GM12878 (cell line): ENCODE measurements at regions of chr6 and their contacts with region 1.

Region 1: GRCh38 chr6:158686791-158687381 is 37.0 kb downstream of the SYTL3 start:
- DNase-seq: no peak
- ATAC-seq: peak; percentile 71
- H3K4me3 ChIP-seq: no peak overlapping the region
- H3K27ac ChIP-seq: no peak overlapping the region
- H3K4me1 ChIP-seq: peaks cover 13% of the 10 kb centered on the region
- H3K27me3 ChIP-seq: no peaks in the 10 kb centered on the region
- CTCF ChIP-seq: no peak
- EP300 ChIP-seq: no peak
- POLR2A ChIP-seq: no peak
- RAD21 ChIP-seq: no peak

Region 2: DNA sequence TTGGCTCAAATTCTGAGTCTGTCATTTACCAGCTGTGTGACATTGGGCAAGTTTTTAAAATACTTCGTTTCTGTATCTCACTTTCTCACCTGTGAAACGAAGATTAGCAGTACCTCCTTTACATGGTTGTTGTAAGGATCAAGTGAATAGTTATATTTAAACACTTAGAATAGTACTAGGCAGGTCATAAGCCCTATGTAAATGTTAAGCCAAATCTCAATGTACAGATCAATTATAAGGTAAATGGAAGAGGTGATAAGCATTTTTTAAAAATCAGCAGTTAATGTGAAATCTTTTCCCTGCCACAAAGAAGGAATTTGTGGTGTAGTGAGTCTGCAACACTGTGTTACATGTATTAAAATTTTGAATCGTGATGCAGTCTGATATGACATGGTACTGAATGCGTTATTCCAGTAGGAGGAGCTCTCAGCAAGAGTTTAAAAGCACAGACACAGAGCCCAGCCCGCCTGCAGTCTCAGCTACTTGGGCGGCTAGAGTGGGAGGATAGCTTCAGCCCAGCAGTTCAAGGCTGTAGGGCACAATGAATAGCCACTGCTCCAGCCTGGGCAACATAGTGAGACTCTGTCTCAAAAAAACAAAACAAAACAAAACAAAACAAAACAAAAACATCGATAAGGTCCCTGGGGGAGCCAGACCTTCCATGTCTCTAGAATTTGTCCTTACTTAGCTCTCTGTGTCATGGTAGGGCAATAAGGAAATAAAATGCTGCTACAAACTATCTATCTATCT is 472.8 kb before region 1 on chr6:
- CTCF ChIA-PET with region 1: interaction called, 96 read pairs
- POLR2A ChIA-PET with region 1: no interaction called
- RAD21 ChIA-PET with region 1: interaction called, 60 read pairs
- SMC1A ChIA-PET with region 1: interaction called, 55 read pairs
- in situ Hi-C with region 1: loop called (anchors 5 kb)
- intact Hi-C with region 1: no loop called
- DNase-seq: peak; percentile 23
- ATAC-seq: peak; percentile 100
- H3K4me3 ChIP-seq: no peak overlapping the region
- H3K27ac ChIP-seq: no peak overlapping the region
- H3K4me1 ChIP-seq: no peaks in the 10 kb centered on the region
- H3K27me3 ChIP-seq: no peaks in the 10 kb centered on the region
- CTCF ChIP-seq: peak; percentile 78 to 91 (median 81); a peak in 5 of 6 replicates
- EP300 ChIP-seq: no peak
- POLR2A ChIP-seq: no peak
- RAD21 ChIP-seq: peak; percentile 88

Region 3: GRCh38 chr6:158452182-158452581 is 234.7 kb before region 1 on chr6:
- CTCF ChIA-PET with region 1: no interaction called
- POLR2A ChIA-PET with region 1: no interaction called
- RAD21 ChIA-PET with region 1: no interaction called
- SMC1A ChIA-PET with region 1: no interaction called
- in situ Hi-C with region 1: no loop called
- intact Hi-C with region 1: no loop called
- DNase-seq: no peak
- ATAC-seq: no peak
- H3K4me3 ChIP-seq: no peak overlapping the region
- H3K27ac ChIP-seq: no peak overlapping the region
- H3K4me1 ChIP-seq: no peaks in the 10 kb centered on the region
- H3K27me3 ChIP-seq: no peaks in the 10 kb centered on the region
- CTCF ChIP-seq: no peak
- EP300 ChIP-seq: no peak
- POLR2A ChIP-seq: no peak
- RAD21 ChIP-seq: no peak

Region 4: DNA sequence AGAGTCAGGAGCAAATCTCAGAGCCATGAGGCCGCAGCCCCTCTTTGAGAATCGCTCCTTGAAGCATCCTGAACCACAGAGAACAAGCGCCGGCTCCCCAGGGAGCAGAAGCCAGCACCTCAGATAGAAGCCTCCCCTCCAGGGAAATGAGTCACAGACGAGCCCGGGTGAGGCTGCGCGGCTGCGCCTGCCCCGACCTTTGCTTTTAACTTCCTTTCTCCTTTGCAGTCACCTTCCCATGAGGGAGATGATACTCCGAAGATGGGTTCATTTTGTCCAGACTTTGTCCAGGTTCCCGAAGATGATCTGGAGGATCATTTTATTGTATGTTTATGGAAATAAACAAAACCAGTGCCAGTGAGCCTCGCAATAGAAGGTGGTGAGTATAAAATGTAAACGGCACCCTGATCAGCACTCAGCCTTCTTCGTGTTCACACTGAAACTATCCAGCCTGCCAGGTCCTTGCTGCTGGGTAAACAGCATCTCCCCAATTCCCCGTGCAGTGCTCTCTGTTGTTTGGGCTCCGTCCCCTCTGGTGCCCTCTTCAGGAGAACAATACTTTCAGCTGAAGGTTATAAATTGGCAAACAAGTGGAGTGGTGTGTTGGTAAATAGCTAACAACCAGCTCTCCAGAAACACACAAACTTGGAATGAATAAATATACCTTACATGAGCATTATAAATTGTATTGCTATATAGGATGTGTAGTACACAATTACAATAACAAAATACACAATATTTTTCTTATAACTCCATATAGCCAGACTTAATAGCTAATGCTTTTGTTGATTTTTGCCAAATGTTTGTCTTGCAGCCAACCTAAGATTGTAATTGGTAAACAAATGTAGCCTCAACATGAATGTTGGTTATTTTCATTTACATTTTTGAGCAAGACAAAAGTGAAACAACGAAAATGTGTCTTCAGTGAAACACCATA is 168.4 kb before region 1 on chr6:
- CTCF ChIA-PET with region 1: interaction called, 11 read pairs
- POLR2A ChIA-PET with region 1: no interaction called
- RAD21 ChIA-PET with region 1: interaction called, 18 read pairs
- SMC1A ChIA-PET with region 1: interaction called, 10 read pairs
- in situ Hi-C with region 1: no loop called
- intact Hi-C with region 1: no loop called
- DNase-seq: peak; percentile 71
- ATAC-seq: peak; percentile 89
- H3K4me3 ChIP-seq: peak overlapping the region; percentile 54; the same call in 1 of the 2 replicates
- H3K27ac ChIP-seq: peak overlapping the region; percentile 10
- H3K4me1 ChIP-seq: peaks cover 13% of the 10 kb centered on the region
- H3K27me3 ChIP-seq: no peaks in the 10 kb centered on the region
- CTCF ChIP-seq: peak; percentile 64 to 69 (median 69)
- EP300 ChIP-seq: 0 out of 4 replicates have a peak, but pooled peaks of 1 of the 2 experiments have one; percentile 13
- POLR2A ChIP-seq: no peak
- RAD21 ChIP-seq: peak; percentile 83

Region 5: DNA sequence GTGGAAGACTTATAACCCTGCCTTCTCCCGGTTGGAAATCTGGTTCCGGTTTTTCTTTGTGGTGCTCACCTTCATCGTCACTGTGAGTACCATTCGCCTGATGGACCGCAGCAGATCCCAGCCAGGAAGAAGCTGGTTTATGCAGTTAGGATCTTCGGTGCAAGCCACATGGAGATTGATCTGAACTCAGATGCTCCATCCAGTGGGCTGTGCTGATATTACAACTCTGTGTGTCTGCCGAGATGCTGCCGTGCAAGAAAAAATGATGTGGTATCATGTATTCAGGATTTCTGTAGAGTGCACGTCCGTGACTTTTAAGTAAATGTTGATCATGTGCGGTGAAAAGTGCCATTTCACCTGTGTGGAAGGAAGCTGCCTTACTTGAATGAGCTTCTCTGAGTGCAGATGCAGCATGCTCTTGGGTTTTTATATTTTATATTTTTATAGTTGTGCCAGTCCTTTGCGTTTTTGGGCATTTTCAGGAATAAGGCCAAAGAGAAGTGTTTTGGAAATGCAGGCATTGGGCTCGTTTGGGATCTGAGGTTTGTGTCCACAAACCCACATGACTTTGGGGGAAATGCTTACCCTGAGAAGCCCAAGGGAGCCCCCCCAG is 81.5 kb before region 1 on chr6:
- CTCF ChIA-PET with region 1: interaction called, 37 read pairs
- POLR2A ChIA-PET with region 1: no interaction called
- RAD21 ChIA-PET with region 1: interaction called, 16 read pairs
- SMC1A ChIA-PET with region 1: interaction called, 15 read pairs
- in situ Hi-C with region 1: no loop called
- intact Hi-C with region 1: loop called (anchors 1 kb)
- DNase-seq: peak; percentile 36
- ATAC-seq: peak; percentile 90
- H3K4me3 ChIP-seq: no peak overlapping the region
- H3K27ac ChIP-seq: no peak overlapping the region
- H3K4me1 ChIP-seq: no peaks in the 10 kb centered on the region
- H3K27me3 ChIP-seq: no peaks in the 10 kb centered on the region
- CTCF ChIP-seq: peak; percentile 68 to 84 (median 74); a peak in 5 of 6 replicates
- EP300 ChIP-seq: no peak
- POLR2A ChIP-seq: no peak
- RAD21 ChIP-seq: peak; percentile 72

Region 6: GRCh38 chr6:158631678-158632537 is 55.0 kb before region 1 on chr6:
- CTCF ChIA-PET with region 1: interaction called, 23 read pairs
- POLR2A ChIA-PET with region 1: no interaction called
- RAD21 ChIA-PET with region 1: interaction called, 3 read pairs
- SMC1A ChIA-PET with region 1: interaction called, 6 read pairs
- in situ Hi-C with region 1: no loop called
- intact Hi-C with region 1: no loop called
- DNase-seq: no peak
- ATAC-seq: no peak
- H3K4me3 ChIP-seq: no peak overlapping the region
- H3K27ac ChIP-seq: no peak overlapping the region
- H3K4me1 ChIP-seq: no peaks in the 10 kb centered on the region
- H3K27me3 ChIP-seq: no peaks in the 10 kb centered on the region
- CTCF ChIP-seq: no peak
- EP300 ChIP-seq: no peak
- POLR2A ChIP-seq: no peak
- RAD21 ChIP-seq: no peak

Region 7: GRCh38 chr6:158649289-158650143 is 37.4 kb before region 1 on chr6 and contains the start of gene SYTL3:
- CTCF ChIA-PET with region 1: interaction called, 72 read pairs
- POLR2A ChIA-PET with region 1: interaction called, 5 read pairs
- RAD21 ChIA-PET with region 1: interaction called, 28 read pairs
- SMC1A ChIA-PET with region 1: interaction called, 27 read pairs
- in situ Hi-C with region 1: no loop called
- intact Hi-C with region 1: loop called (anchors 5 kb)
- DNase-seq: peak; percentile 95
- ATAC-seq: peak; percentile 71
- H3K4me3 ChIP-seq: peak within 1 kb of the TSS; percentile 45; the same call in 1 of the 2 replicates
- H3K27ac ChIP-seq: peak within 1 kb of the TSS; percentile 76
- H3K4me1 ChIP-seq: peaks cover 43% of the 10 kb centered on the region
- H3K27me3 ChIP-seq: no peaks in the 10 kb centered on the region
- CTCF ChIP-seq: no peak
- EP300 ChIP-seq: peak; percentile 31 to 85; a peak in 3 of 4 replicates
- POLR2A ChIP-seq: peak; percentile 55
- RAD21 ChIP-seq: no peak
- polyA plus RNA-seq, gene SYTL3: 3.3 to 4.2 TPM

Region 8: DNA sequence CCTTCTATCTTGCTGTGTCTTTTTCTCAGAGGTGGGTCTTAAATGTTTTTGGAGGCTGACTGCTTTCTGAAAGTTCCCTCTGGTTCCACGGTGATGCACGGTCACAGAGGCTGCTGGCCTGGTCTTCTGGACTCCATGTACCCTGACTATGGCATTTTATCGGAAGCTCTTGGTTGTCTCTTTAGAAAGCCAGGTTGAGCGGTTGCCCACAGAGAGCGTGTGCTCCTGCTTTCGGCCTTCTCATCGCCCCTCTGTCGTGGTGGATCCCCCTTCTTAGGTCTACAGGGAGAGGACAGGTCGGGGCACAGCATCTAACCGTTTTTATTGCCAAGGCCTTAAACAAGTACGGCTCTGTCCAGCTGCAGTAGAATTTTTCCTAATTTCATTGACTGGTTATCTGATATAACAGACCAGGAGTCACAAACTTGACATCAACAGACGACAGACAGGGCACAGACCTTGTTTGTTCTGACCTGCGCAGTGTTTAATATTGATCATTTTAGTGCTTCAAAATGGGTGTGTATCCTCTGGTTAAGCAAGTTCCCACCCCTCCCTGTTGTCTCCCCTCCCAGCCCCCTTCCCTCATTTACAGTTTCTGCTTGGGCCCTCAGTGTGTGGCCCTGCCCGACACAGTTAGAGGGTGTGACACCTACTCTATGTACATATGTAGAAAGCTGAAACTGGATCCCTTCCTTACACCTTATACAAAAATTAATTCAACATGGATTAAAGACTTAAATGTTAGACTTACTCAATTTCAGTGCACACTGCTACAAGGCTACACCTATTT is 12.3 kb before region 1 on chr6:
- CTCF ChIA-PET with region 1: interaction called, 19 read pairs
- POLR2A ChIA-PET with region 1: no interaction called
- RAD21 ChIA-PET with region 1: interaction called, 6 read pairs
- SMC1A ChIA-PET with region 1: interaction called, 13 read pairs
- in situ Hi-C with region 1: no loop called
- intact Hi-C with region 1: no loop called
- DNase-seq: no peak
- ATAC-seq: no peak
- H3K4me3 ChIP-seq: no peak overlapping the region
- H3K27ac ChIP-seq: no peak overlapping the region
- H3K4me1 ChIP-seq: no peaks in the 10 kb centered on the region
- H3K27me3 ChIP-seq: no peaks in the 10 kb centered on the region
- CTCF ChIP-seq: no peak
- EP300 ChIP-seq: no peak
- POLR2A ChIP-seq: no peak
- RAD21 ChIP-seq: no peak

Region 9: GRCh38 chr6:158863646-158864045 is 176.8 kb after region 1 on chr6:
- CTCF ChIA-PET with region 1: no interaction called
- POLR2A ChIA-PET with region 1: no interaction called
- RAD21 ChIA-PET with region 1: no interaction called
- SMC1A ChIA-PET with region 1: no interaction called
- in situ Hi-C with region 1: no loop called
- intact Hi-C with region 1: no loop called
- DNase-seq: no peak
- ATAC-seq: no peak
- H3K4me3 ChIP-seq: no peak overlapping the region
- H3K27ac ChIP-seq: no peak overlapping the region
- H3K4me1 ChIP-seq: peaks cover 26% of the 10 kb centered on the region
- H3K27me3 ChIP-seq: no peaks in the 10 kb centered on the region
- CTCF ChIP-seq: no peak
- EP300 ChIP-seq: no peak
- POLR2A ChIP-seq: no peak
- RAD21 ChIP-seq: no peak